Esophagus muscularis mucosa (tissue), 4 donors: ENCODE measurements at regions of chr14 and their contacts with region 1.

Region 1: GRCh38 chr14:96568621-96569020 is 66.4 kb downstream of the PAPOLA start:
- DNase-seq: no peak
- H3K4me3 ChIP-seq: no peak overlapping the region
- H3K27ac ChIP-seq: no peak overlapping the region
- H3K4me1 ChIP-seq: peaks cover 1 to 23% (median 16%) of the 10 kb centered on the region in 4 donors
- H3K27me3 ChIP-seq: no peaks in the 10 kb centered on the region
- CTCF ChIP-seq: no peak
- EP300 ChIP-seq: no peak
- POLR2A ChIP-seq: no peak

Region 2: DNA sequence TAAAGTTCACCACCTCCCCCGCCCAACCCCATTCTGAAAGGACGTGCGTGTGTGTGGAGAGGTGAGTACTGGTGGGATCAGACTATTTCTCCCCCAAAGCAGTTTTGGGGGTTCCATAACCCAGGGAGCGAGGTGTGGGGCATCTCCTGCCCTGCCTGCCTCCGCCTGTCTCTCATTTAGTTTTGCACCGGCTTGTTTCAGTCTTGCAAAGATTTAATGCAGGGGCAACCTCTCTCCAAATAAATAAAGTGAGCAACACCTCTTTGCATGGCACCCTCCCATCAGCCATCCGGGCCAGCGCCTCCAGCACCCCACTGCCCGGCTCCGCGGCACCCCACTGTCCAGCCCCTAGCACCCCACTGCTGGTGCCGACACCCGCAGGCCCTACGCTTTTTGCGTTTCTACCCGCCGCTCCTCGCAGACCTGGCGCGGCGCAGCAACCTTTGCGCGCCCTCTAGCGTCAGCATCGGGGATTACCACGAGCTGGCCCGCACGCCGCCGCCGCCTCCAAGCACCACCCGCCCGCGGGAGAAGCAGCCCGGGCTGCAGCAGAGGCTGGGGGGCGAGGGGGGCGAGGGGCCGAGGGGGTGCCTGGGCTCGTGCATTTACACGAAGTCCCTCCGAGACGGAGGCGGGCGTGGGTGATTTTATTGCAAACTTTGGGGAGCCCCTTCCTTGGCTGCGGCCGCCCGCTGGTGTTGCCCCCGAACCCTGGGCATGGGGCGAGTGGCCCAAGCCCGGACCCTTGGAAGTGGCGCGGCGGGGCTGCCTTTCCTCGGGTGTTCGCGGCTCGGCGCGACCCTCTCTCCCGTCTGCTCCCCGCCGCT is 172.7 kb after region 1 on chr14:
- intact Hi-C with region 1: loop called (anchors 2 kb)
- DNase-seq: no peak
- H3K4me3 ChIP-seq: peak overlapping the region; percentile 41 to 60 (median 45)
- H3K27ac ChIP-seq: no peak overlapping the region
- H3K4me1 ChIP-seq: peaks cover 8 to 10% (median 10%) of the 10 kb centered on the region in 4 donors
- H3K27me3 ChIP-seq: peaks cover 0 to 84% (median 13%) of the 10 kb centered on the region in 4 donors
- CTCF ChIP-seq: peak; percentile 67 to 96 (median 92)
- EP300 ChIP-seq: no peak
- POLR2A ChIP-seq: no peak

Region 3: GRCh38 chr14:96796851-96797581 is 228.4 kb after region 1 on chr14 and contains the start of gene VRK1:
- intact Hi-C with region 1: no loop called
- DNase-seq: peak; percentile 98
- H3K4me3 ChIP-seq: peak within 1 kb of the TSS; percentile 73 to 92 (median 82)
- H3K27ac ChIP-seq: peak within 1 kb of the TSS; percentile 11 to 57 (median 44)
- H3K4me1 ChIP-seq: peaks cover 11 to 21% (median 15%) of the 10 kb centered on the region in 4 donors
- H3K27me3 ChIP-seq: no peaks in the 10 kb centered on the region
- CTCF ChIP-seq: no peak
- EP300 ChIP-seq: no peak
- POLR2A ChIP-seq: no peak
- total RNA-seq, gene VRK1: 10.1 to 17.9 (median 14.3) TPM